ENCODE measurements at regions of chr9 and their contacts with region 1.

Region 1: GRCh38 chr9:3240656-3241268 is 285.0 kb downstream of the RFX3 start:
- DNase-seq: peak; percentile 57 to 87 (median 71)
- ATAC-seq: peak; percentile 88 to 91
- H3K4me3 ChIP-seq: no peak overlapping the region
- H3K27ac ChIP-seq: no peak overlapping the region
- H3K4me1 ChIP-seq: no peaks in the 10 kb centered on the region
- H3K27me3 ChIP-seq: no peaks in the 10 kb centered on the region

Region 2: DNA sequence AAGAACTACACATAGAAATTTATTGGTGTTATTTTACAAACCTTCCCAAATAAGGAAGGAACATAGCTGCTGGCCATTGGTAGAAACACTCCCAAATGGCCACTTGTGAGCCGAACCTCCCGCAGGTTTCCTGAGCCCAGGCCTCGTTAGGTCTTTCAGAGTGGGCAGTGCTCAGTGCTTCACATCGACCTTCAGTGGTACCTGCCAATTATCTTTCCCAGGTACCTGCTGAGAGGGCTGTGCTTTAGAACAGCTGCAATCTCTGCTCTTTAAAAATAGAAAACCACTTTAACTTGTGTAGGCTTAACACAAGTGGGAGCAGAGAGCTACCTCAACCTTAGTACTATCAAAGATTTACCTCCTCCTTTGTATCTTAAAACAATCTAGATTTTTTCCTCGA is 49.0 kb before region 1 on chr9:
- intact Hi-C with region 1: no loop called
- DNase-seq: no peak
- ATAC-seq: no peak
- H3K4me3 ChIP-seq: no peak overlapping the region
- H3K27ac ChIP-seq: no peak overlapping the region
- H3K4me1 ChIP-seq: no peaks in the 10 kb centered on the region
- H3K27me3 ChIP-seq: no peaks in the 10 kb centered on the region

Region 3: GRCh38 chr9:3215658-3216057 is 25.1 kb before region 1 on chr9:
- intact Hi-C with region 1: no loop called
- DNase-seq: no peak
- ATAC-seq: no peak
- H3K4me3 ChIP-seq: no peak overlapping the region
- H3K27ac ChIP-seq: no peak overlapping the region
- H3K4me1 ChIP-seq: no peaks in the 10 kb centered on the region
- H3K27me3 ChIP-seq: no peaks in the 10 kb centered on the region

Region 4: GRCh38 chr9:3441197-3441816 is 200.5 kb after region 1 on chr9:
- intact Hi-C with region 1: loop called in 1 of 4 experiments (anchors 5 kb)
- DNase-seq: peak in 2 of 3 donors; percentile 16 to 49
- ATAC-seq: peak; percentile 64 to 65
- H3K4me3 ChIP-seq: no peak overlapping the region
- H3K27ac ChIP-seq: no peak overlapping the region
- H3K4me1 ChIP-seq: no peaks in the 10 kb centered on the region
- H3K27me3 ChIP-seq: no peaks in the 10 kb centered on the region